ENCODE measurements at regions of chr6 and their contacts with region 1.

Region 1: DNA sequence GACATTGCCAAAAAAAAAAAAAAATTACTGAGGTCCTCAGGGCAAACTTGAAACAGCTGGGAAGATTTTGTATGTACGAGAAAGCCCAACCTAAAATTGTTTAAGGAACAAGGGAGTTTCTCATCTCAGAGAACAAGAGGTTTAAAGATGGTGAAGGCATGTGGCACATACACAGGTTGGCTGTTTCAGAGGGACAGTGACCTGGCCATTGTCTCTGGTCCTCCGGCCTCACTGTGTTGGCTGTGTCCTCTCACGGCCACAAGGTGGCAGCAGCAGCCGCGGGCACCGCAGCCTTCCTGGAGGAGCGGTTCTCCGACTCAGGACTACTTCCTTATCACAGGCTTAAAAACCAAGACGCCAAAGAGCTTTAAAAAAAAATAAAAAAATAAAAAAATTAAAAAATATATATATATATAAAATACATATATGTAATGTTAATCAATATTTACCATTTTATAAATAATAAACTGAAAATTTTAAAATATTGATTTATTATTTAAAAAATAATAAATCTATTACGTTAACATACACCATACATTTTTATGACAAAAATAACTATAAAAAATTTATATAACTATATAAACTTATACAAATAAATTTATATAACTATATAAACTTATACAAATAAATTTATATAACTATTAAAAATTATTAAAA is 52.8 kb downstream of the GTF2H5 start:
- H3K4me3 ChIP-seq: no peak overlapping the region
- H3K27ac ChIP-seq: no peak overlapping the region
- H3K4me1 ChIP-seq: peaks cover 3% of the 10 kb centered on the region; the same call in 1 of the 2 replicates
- CTCF ChIP-seq: peak; percentile 82

Region 2: DNA sequence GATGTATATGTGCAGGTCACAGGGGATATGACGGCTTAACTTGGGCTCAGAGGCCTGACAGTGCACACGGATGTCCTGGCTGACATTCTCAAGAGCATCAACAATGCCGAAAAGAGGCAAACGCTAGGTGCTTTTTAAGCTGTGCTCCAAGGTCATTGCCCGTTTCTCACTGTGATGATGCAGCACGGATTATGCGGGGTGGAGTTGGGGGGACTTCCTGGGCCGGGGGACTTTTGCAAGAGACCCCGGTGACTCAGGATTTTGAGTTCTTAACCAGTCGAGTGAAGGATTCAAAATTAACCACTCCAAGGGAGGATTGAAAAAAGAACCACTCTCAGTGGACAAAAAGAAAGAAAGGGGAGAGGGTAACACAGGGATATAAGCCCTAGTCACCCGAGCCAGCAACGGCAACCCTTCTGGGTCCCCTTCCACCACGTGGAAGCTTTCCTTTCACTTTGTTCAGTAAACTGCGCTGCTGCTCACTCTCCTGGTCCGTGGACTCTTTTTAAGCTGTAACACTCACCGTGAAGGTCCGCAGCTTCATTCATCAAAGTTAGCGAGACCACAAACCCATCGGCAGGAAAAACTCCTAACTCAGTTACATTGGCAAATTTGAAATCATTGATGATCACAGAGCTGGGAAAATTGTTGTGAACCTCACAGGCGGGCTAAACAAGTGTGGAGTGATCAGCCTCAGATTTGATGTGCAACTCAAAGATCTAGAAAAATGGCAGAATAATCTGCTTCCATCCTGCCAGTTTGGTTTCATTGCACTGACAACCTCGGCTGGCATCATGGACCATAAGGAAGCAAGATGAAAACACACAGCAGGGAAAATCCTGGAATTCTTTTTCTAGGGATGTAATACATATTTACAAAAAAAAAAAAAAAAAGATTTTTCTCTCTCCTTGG is 1244.4 kb before region 1 on chr6:
- CTCF ChIA-PET with region 1: no interaction called
- POLR2A ChIA-PET with region 1: no interaction called
- H3K4me3 ChIP-seq: peak overlapping the region; percentile 20
- H3K27ac ChIP-seq: no peak overlapping the region; the same call in 1 of the 2 replicates
- H3K4me1 ChIP-seq: peaks cover 38% of the 10 kb centered on the region
- CTCF ChIP-seq: no peak

Region 3: DNA sequence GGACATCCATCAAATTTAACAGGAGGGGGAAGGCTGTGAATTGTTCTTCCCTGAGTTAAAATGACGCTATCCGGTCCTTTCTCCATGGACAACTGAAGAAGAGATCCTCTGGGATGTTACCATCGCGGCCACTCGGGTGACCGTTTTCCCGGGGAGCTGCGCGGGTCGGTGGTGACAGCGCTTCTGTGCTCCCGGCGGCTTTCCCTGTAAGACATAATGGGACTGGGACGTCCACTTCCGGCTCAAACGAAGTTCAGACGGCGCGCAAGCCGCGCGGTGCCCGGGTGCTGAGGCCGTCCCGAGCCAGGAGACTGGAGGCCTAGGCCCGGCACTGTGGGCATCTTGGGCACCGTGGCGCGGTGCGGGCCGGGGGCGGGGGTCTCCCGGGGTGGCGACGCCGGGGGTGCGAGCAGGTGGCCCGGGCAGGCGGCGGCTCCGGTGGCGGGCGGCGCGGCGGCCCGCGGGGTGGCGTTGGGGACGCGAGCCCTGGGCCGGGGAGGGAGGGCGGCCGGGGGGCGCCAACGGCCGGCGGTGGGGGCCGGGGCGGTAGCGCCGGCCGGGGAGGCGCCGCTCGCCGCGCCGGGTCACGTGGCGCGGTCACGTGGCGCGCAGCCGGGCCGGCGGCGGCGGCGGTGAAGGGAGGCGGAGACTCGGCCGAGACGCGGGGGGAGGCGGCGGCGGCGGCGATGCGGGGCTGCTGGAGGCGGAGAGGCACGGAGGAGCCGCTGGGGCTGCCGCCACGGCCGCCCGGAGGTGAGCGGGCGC is 10.8 kb after region 1 on chr6:
- CTCF ChIA-PET with region 1: interaction called, 22 read pairs
- POLR2A ChIA-PET with region 1: no interaction called
- H3K4me3 ChIP-seq: peak overlapping the region; percentile 79
- H3K27ac ChIP-seq: peak overlapping the region; percentile 89
- H3K4me1 ChIP-seq: peaks cover 8% of the 10 kb centered on the region; the same call in 1 of the 2 replicates
- CTCF ChIP-seq: no peak

Region 4: DNA sequence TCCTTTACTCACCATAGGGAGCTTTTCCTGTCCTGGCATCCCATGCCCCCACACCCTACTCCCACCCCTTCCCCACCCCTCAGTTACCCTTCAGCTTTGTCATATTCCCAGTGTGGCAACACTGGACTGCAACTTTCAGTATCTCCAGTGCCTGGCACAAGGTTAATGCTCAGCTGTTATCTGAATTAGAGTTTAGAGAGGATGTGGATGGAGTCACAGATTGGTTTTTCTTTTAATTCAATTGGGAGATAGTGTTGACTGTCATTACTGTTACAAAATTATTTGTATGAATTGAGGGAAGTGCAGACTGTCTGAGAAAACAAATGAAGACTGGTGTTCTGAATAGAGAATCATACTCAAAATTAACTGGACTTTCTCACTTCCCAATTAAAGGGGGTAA is 181.3 kb after region 1 on chr6:
- CTCF ChIA-PET with region 1: interaction called, 14 read pairs
- POLR2A ChIA-PET with region 1: no interaction called
- H3K4me3 ChIP-seq: no peak overlapping the region
- H3K27ac ChIP-seq: no peak overlapping the region
- H3K4me1 ChIP-seq: peaks cover 14% of the 10 kb centered on the region
- CTCF ChIP-seq: no peak

Region 5: DNA sequence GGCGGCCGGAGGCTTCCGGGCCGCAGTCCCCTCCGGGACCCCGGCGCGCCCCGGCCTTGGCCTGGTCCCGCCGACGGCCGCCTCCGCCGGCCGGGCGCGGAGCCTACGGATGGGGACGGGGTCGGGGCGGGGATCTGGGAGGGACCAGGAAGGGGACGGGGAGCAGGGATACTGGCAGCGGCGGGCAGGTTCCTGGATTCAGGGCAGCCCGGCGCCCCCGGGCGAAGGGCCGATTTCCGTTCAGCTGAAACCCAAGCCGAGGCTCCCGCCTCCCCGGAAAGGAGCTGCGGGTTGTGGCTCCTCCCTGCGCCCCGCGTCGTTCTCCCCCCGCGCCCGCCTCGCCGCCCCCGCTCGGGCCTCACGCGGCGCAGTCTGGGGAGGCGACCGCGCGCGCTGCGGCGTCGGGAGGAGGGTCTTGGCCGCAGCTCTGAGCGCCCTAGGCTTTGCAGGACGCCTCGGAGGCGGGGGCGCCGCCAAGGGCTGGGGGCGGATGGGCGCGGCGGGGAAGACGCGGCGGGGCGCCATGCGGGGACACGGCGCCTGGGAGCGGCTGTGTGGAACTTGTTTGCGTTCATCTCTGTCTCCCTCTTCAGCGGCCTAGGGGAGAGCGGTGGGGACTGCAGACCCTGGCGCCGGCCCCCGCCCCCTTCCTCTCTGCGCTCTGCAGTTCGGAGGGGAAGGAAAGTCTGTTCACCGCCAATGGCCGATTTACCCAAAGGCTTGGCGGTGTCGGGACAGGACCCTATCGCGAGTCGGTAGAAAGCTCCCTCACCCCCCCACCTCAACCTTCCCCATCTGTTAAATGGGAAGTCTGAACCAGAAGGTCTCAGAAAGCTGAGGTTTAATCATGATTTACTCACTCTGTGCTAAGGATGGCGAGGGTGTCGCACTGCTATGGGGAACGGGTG is 316.2 kb after region 1 on chr6:
- CTCF ChIA-PET with region 1: interaction called, 15 read pairs
- POLR2A ChIA-PET with region 1: no interaction called
- H3K4me3 ChIP-seq: peak overlapping the region; percentile 66
- H3K27ac ChIP-seq: no peak overlapping the region; the same call in 1 of the 2 replicates
- H3K4me1 ChIP-seq: no peaks in the 10 kb centered on the region; the same call in 1 of the 2 replicates
- CTCF ChIP-seq: no peak

Region 6: GRCh38 chr6:158605266-158605878 is 384.5 kb after region 1 on chr6:
- CTCF ChIA-PET with region 1: interaction called, 32 read pairs
- POLR2A ChIA-PET with region 1: no interaction called
- H3K4me3 ChIP-seq: no peak overlapping the region
- H3K27ac ChIP-seq: no peak overlapping the region
- H3K4me1 ChIP-seq: no peaks in the 10 kb centered on the region
- CTCF ChIP-seq: no peak; the same call in 1 of the 2 replicates

Region 7: DNA sequence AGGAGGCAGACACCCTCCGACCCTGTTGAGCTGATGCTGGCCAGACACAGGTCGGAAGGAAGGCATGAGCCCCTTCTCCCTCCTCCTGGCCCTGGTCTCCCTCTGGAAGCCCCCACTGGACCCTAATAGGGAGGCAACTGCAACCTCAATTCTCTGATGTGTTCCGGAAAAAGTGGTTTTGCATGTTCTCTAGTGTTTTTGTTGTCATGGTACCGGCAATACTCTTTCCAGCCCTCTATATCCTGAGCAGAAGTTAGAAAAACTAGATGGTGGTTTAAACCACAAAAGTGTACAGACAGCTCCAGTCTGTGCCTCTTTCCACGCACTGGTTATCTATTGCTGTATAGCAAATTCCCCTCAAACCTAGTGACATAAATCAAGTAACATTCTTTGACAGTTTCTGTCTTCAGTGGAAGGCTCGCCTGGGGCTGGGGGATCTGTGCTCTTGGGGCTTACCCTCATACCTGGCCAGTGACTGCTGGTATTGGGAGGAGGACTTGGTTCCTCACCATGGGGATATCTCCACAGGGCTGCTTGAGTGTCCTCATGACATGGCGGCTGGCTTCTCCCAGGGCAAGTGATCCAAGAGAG is 466.0 kb after region 1 on chr6:
- CTCF ChIA-PET with region 1: interaction called, 62 read pairs
- POLR2A ChIA-PET with region 1: no interaction called
- H3K4me3 ChIP-seq: no peak overlapping the region
- H3K27ac ChIP-seq: no peak overlapping the region
- H3K4me1 ChIP-seq: no peaks in the 10 kb centered on the region
- CTCF ChIP-seq: no peak